Mammary epithelial cell (primary cell): ENCODE measurements at regions of chr17 and their contacts with region 1.

Region 1: GRCh38 chr17:39621523-39622379 is 5.0 kb upstream of the PPP1R1B start:
- DNase-seq: peak; percentile 66
- H3K4me3 ChIP-seq: no peak overlapping the region
- H3K27ac ChIP-seq: no peak overlapping the region
- H3K4me1 ChIP-seq: peaks cover 18% of the 10 kb centered on the region
- H3K27me3 ChIP-seq: peaks cover 2% of the 10 kb centered on the region
- CTCF ChIP-seq: peak; percentile 100

Region 2: GRCh38 chr17:39209317-39210092 is 412.2 kb before region 1 on chr17:
- CTCF ChIA-PET with region 1: interaction called, 8 read pairs
- dilution Hi-C with region 1: no loop called
- in situ Hi-C with region 1: no loop called
- intact Hi-C with region 1: loop called (anchors 1 kb)
- DNase-seq: no peak
- H3K4me3 ChIP-seq: no peak overlapping the region
- H3K27ac ChIP-seq: no peak overlapping the region
- H3K4me1 ChIP-seq: peaks cover 22% of the 10 kb centered on the region
- H3K27me3 ChIP-seq: no peaks in the 10 kb centered on the region
- CTCF ChIP-seq: no peak

Region 3: DNA sequence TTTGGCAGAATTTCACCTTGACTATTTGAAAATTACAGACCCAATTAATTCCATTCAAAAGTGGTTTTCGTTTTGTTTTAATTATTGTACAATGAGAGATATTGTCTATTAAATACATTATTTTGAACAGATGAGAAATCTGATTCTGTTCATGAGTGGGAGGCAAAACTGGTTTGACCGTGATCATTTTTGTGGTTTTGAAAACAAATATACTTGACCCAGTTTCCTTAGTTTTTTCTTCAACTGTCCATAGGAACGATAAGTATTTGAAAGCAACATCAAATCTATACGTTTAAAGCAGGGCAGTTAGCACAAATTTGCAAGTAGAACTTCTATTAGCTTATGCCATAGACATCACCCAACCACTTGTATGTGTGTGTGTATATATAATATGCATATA is 87.9 kb before region 1 on chr17:
- CTCF ChIA-PET with region 1: no interaction called
- dilution Hi-C with region 1: no loop called
- in situ Hi-C with region 1: no loop called
- intact Hi-C with region 1: no loop called
- DNase-seq: peak; percentile 17
- H3K4me3 ChIP-seq: no peak overlapping the region
- H3K27ac ChIP-seq: no peak overlapping the region
- H3K4me1 ChIP-seq: peaks cover 7% of the 10 kb centered on the region
- H3K27me3 ChIP-seq: no peaks in the 10 kb centered on the region
- CTCF ChIP-seq: no peak

Region 4: GRCh38 chr17:39547713-39548478 is 73.9 kb before region 1 on chr17:
- CTCF ChIA-PET with region 1: interaction called, 9 read pairs
- dilution Hi-C with region 1: no loop called
- in situ Hi-C with region 1: loop called in 1 of 2 experiments (anchors 5 kb)
- intact Hi-C with region 1: loop called (anchors 1 kb)
- DNase-seq: peak; percentile 34
- H3K4me3 ChIP-seq: no peak overlapping the region
- H3K27ac ChIP-seq: no peak overlapping the region
- H3K4me1 ChIP-seq: no peaks in the 10 kb centered on the region
- H3K27me3 ChIP-seq: no peaks in the 10 kb centered on the region
- CTCF ChIP-seq: peak; percentile 89 to 96

Region 5: GRCh38 chr17:39603304-39604016 is 18.3 kb before region 1 on chr17:
- CTCF ChIA-PET with region 1: no interaction called
- dilution Hi-C with region 1: no loop called
- in situ Hi-C with region 1: no loop called
- intact Hi-C with region 1: loop called (anchors 2 kb)
- DNase-seq: peak; percentile 33
- H3K4me3 ChIP-seq: peak overlapping the region in 1 of 3 experiments; percentile 32
- H3K27ac ChIP-seq: no peak overlapping the region
- H3K4me1 ChIP-seq: peaks cover 25% of the 10 kb centered on the region
- H3K27me3 ChIP-seq: peaks cover 56% of the 10 kb centered on the region
- CTCF ChIP-seq: no peak

Region 6: DNA sequence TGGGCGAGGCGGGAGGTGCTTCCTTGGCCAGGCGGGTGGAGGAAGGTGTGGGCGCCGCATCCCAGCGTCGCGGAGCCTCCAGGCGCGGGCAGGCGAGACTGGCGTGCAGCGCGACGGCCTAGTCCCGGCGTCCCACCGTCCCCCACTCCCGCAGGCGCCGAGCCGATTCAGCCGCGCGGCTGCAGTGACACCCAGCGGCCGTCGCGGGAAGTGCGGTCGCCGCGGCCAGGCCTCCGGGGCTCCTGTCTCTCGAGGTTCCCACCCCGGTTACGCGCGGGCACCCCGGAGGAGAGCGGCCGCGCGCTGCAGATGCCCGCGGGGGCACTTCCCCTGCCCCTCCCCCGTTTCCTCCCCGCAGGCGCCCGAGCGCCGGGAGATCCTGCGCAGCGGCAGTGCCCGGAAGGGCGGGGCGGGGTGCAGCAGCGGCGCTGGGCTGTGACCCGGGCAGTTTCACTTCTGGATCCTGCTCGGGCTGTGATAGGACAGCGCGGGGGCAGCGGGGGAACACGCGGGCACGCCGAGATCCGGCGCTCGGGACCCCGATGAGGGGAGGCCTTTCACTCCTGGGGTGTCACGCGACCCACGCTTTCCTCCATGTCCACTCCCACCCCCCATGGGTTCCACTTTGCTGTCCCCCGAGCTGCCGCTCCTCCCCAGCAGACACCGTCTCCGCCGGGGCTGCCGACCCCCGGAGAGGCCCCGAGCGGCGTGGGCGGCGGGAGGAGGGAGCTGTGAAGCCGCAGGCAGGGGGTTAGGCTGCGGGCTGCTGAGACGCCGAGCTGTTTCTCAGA is 132.6 kb after region 1 on chr17:
- CTCF ChIA-PET with region 1: interaction called, 4 read pairs
- dilution Hi-C with region 1: no loop called
- in situ Hi-C with region 1: loop called (anchors 5 kb)
- intact Hi-C with region 1: loop called (anchors 1 kb)
- DNase-seq: peak; percentile 82
- H3K4me3 ChIP-seq: peak overlapping the region; percentile 67 to 76 (median 73)
- H3K27ac ChIP-seq: peak overlapping the region; percentile 29
- H3K4me1 ChIP-seq: peaks cover 21% of the 10 kb centered on the region
- H3K27me3 ChIP-seq: peaks cover 2% of the 10 kb centered on the region
- CTCF ChIP-seq: peak; percentile 66 to 86